Head of caudate nucleus (tissue), 42 donors: ENCODE measurements at regions of chr3 and their contacts with region 1.

Region 1: GRCh38 chr3:130892759-130893375 is 1.0 kb upstream of the ATP2C1 start:
- DNase-seq: peak in 41 of 42 donors; percentile 35 to 93 (median 76)

Region 2: GRCh38 chr3:130658678-130659077 is 234.2 kb before region 1 on chr3:
- intact Hi-C with region 1: no loop called
- DNase-seq: no peak

Region 3: GRCh38 chr3:130746246-130747039 is 146.4 kb before region 1 on chr3 and contains the start of gene PIK3R4:
- intact Hi-C with region 1: loop called (anchors 5 kb)
- DNase-seq: peak; percentile 91 to 99 (median 98)

Region 4: GRCh38 chr3:131026321-131027178 is 133.7 kb after region 1 on chr3 and contains the starts of genes ASTE1 and NEK11:
- intact Hi-C with region 1: loop called (anchors 10 kb)
- DNase-seq: peak; percentile 80 to 97 (median 92)